AG04450 (cell line): ENCODE measurements at regions of chr20 and their contacts with region 1.

Region 1: DNA sequence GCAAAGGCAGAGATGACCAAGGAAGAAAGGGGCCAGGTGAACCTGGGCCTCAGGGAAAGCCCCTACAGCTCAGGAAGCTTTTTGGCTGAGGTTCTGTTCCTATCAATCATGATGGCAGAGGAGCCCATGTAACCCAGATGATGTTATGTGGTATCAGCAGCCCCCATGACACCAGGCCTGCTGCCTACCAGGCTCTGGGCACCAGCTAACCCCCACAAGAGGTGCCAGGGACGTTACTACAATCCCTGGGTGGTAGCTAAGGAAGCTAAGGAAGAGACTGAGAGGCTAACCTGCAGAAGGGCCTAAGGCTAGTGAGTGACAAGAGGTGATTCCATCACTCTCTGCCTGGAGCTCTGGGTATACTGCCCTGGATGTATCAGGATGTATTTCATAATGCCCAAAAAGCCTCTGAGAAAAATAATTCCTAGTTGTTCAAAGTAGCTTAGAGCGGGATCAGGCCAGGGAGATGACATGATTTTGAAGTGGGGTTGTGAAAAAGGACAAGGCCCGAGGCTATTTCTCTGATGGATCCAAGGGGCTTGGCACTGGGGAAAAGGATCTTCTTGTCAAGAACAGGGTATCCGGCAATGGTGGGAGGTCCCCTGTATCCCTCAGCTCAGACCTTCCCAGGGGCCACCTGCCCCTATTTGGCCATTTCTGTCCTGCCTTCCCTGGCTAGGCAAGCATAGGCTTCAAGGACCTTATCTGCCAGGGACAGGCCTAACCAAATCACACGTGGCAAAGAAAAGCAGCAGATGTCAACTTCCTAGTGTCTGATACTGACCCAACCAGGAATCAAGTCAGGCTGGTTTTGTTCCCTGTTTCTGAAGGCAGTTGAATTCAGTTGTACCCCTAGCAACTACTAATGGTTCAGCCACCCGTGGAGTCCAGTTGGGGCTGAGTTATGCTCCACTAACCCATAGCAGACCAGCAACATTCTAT is 41.3 kb downstream of the PANK2 start:
- DNase-seq: no peak
- H3K4me3 ChIP-seq: no peak overlapping the region
- H3K27ac ChIP-seq: no peak overlapping the region
- H3K27me3 ChIP-seq: no peaks in the 10 kb centered on the region
- CTCF ChIP-seq: no peak

Region 2: GRCh38 chr20:3454826-3455225 is 475.7 kb before region 1 on chr20:
- CTCF ChIA-PET with region 1: no interaction called
- POLR2A ChIA-PET with region 1: interaction called, 12 read pairs
- DNase-seq: no peak
- H3K4me3 ChIP-seq: no peak overlapping the region
- H3K27ac ChIP-seq: no peak overlapping the region
- H3K27me3 ChIP-seq: peaks cover 28% of the 10 kb centered on the region
- CTCF ChIP-seq: no peak

Region 3: DNA sequence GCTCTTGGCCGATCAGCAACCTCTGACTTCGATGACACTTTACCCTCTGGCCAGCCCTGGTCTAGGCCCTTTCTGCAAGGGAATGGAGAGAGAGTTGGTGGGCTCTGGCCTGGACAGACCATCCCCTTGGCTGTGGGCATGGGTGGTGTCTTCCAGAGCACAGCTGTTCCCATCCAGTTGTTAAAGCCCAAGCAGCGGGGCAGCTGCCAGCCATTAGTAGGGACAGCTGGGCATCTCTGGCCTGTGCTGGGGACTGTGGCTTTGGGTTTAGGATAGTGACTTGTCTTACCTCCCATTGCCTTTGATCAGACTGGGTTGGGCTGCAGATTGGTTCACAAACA is 131.7 kb before region 1 on chr20:
- CTCF ChIA-PET with region 1: no interaction called
- POLR2A ChIA-PET with region 1: no interaction called
- DNase-seq: no peak
- H3K4me3 ChIP-seq: no peak overlapping the region; the same call in 1 of the 2 replicates
- H3K27ac ChIP-seq: peak overlapping the region; percentile 21
- H3K27me3 ChIP-seq: no peaks in the 10 kb centered on the region
- CTCF ChIP-seq: no peak

Region 4: DNA sequence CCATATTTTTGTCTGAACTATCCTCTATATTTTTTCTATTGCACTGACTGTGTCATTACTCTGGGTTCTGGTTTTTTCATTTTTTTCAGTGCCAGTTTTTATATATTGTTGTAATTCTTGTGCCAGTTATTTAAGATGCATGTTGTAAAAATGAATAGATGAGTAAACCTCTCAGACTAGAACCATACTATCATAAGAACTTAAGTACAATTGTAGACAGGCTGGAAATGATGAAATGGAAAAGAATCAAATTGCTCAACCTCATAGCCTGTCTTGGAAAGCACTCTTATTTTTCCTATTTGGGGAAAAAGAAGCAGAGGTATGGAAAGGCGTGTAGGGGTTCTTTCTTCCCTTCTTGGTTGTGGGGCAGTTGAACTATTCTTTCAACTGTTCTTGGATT is 11.2 kb before region 1 on chr20:
- CTCF ChIA-PET with region 1: no interaction called
- POLR2A ChIA-PET with region 1: no interaction called
- DNase-seq: no peak
- H3K4me3 ChIP-seq: no peak overlapping the region
- H3K27ac ChIP-seq: no peak overlapping the region
- H3K27me3 ChIP-seq: no peaks in the 10 kb centered on the region
- CTCF ChIP-seq: no peak

Region 5: DNA sequence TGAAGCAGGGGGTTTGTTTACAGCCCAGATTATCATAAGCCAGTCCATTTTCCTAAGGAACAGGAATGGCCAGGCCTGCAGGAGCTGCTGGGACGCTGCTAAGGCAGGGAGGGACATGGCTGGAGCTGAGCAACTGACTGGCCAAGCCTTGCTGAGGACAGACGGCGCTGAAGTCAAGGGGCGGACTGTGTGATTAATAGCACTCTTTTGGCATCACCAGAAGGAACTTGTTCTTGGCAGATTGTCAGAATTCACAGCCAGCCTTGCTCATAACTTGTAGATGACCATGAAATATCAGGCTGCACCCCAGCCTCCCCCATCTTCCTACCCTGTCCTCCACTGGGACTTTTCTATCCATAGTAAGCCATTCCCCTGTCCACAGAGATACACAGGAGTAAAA is 303.6 kb after region 1 on chr20:
- CTCF ChIA-PET with region 1: no interaction called
- POLR2A ChIA-PET with region 1: no interaction called
- DNase-seq: no peak
- H3K4me3 ChIP-seq: no peak overlapping the region
- H3K27ac ChIP-seq: no peak overlapping the region
- H3K27me3 ChIP-seq: peaks cover 4% of the 10 kb centered on the region
- CTCF ChIP-seq: no peak